Activated CD4-positive, alpha-beta T cell treated with anti-CD3 and anti-CD28 coated beads for 36 hours (primary cell): ENCODE measurements at regions of chr12 and their contacts with region 1.

Region 1: DNA sequence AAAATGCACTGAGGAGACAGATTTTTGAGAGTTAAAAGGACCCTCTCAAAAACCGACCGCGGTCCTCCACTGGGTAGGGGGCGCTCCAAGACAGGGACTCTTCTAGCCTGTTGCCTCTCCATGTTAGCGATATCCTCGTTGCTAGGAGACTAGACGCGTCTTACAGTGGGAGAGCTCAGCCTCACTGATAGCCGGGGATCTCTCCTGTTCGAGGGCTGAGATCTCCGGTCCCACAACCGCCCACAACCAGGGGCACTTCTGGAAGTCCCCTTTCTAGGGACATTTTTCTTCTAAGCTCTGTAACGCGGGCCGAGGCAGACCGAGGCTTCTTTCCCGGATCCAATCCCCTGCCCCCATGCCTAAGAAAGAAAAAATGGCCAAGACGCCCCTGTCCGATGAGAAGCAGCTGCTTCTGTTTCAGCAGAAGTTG is 21.3 kb downstream of the FKBP11 start:
- DNase-seq: peak; percentile 92
- ATAC-seq: peak; percentile 94
- H3K4me3 Mint-ChIP-seq: peak overlapping the region; percentile 63
- H3K27ac Mint-ChIP-seq: no peak overlapping the region
- H3K4me1 Mint-ChIP-seq: peaks cover 5% of the 10 kb centered on the region
- H3K27me3 Mint-ChIP-seq: peaks cover 3% of the 10 kb centered on the region

Region 2: DNA sequence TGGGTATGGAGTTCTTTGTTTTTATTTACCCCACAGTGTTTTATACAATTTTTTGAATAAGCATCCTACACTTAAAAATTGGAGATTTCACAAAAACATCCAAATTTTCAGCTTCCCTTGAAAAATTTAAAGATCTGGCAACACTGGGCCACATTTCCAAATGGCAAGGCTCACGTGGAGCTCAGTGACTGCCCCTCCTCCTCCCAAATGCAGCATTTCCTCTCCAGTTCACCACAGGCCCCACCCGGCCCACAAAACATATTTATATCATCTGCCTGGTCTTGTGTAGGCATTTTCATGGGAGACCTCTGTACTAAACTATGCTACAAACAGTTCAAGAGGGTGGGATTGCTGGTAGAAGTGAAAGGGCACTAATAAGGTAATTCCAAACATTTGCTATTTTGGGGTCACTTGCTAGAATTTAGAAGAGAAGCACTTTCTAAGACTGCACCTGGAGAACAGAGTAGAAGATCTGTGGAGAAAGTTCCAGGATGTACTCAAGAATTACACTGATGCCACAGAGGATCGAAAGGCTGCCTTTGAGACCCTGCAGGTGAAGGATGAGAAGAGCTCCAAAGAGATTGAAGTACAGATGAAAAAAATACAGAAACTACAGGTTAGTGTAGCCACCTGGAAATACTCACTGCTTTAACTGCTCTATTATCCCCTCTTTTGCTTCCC is 14.0 kb after region 1 on chr12:
- CTCF ChIA-PET with region 1: interaction called, 55 read pairs
- POLR2A ChIA-PET with region 1: interaction called, 4 read pairs
- intact Hi-C with region 1: no loop called
- DNase-seq: peak; percentile 42
- ATAC-seq: no peak
- H3K4me3 Mint-ChIP-seq: peak overlapping the region; percentile 64
- H3K27ac Mint-ChIP-seq: peak overlapping the region; percentile 85
- H3K4me1 Mint-ChIP-seq: peaks cover 43% of the 10 kb centered on the region
- H3K27me3 Mint-ChIP-seq: no peaks in the 10 kb centered on the region

Region 3: DNA sequence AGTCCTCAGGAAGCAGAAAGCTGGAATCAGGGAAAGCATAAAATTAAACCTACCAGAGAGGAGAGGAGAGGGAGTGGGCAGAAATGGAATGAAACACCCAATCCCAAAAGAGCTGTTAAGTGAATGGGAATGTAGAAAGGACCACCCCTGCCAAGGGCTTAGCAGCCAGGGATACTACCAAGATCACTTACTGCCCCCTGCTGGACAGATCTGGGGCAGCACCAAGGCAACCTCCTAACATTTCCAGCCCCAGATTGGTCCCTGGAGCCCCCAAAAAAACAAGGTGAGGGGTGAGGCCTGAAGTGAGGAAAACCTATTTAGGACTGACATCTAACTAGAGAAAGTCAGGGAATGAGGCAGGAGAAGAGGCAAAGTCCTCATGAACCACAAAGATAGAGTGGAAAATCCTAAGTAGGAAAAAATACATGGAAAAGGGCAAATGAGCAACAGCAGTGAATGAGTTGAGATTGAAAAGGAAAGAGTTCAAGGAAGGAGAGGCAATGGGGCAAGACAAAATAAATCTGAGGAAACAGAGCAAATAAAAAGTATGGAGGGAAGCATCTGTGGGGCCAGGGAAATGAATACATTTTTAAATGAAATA is 32.5 kb after region 1 on chr12:
- CTCF ChIA-PET with region 1: interaction called, 5 read pairs
- POLR2A ChIA-PET with region 1: no interaction called
- intact Hi-C with region 1: loop called (anchors 1 to 2 kb)
- DNase-seq: peak; percentile 89
- ATAC-seq: peak; percentile 82
- H3K4me3 Mint-ChIP-seq: no peak overlapping the region
- H3K27ac Mint-ChIP-seq: no peak overlapping the region
- H3K4me1 Mint-ChIP-seq: peaks cover 23% of the 10 kb centered on the region
- H3K27me3 Mint-ChIP-seq: no peaks in the 10 kb centered on the region

Region 4: DNA sequence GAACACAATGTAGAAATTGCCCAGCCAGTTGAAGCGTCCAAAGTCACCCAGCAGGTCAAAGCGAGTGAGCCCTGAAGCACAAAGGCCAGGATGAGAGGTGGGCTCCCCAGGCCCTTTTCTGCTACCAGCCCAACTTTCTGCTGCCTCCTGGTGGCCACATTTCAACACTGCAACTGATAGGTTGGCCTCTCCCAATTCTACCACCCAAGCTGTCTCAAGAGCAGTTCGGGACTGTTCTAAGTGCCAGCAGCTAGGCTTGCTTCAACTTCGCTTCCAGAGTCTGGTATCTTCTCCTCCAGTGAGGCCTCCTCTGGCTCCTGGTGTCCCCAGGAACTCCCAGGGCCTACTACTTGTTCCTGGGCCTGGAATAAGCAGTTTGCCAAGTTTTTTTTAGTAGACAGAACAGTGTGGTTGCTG is 194.0 kb after region 1 on chr12:
- CTCF ChIA-PET with region 1: no interaction called
- POLR2A ChIA-PET with region 1: no interaction called
- intact Hi-C with region 1: no loop called
- DNase-seq: peak; percentile 80
- ATAC-seq: peak; percentile 76
- H3K4me3 Mint-ChIP-seq: no peak overlapping the region
- H3K27ac Mint-ChIP-seq: no peak overlapping the region
- H3K4me1 Mint-ChIP-seq: peaks cover 8% of the 10 kb centered on the region
- H3K27me3 Mint-ChIP-seq: peaks cover 19% of the 10 kb centered on the region

Region 5: DNA sequence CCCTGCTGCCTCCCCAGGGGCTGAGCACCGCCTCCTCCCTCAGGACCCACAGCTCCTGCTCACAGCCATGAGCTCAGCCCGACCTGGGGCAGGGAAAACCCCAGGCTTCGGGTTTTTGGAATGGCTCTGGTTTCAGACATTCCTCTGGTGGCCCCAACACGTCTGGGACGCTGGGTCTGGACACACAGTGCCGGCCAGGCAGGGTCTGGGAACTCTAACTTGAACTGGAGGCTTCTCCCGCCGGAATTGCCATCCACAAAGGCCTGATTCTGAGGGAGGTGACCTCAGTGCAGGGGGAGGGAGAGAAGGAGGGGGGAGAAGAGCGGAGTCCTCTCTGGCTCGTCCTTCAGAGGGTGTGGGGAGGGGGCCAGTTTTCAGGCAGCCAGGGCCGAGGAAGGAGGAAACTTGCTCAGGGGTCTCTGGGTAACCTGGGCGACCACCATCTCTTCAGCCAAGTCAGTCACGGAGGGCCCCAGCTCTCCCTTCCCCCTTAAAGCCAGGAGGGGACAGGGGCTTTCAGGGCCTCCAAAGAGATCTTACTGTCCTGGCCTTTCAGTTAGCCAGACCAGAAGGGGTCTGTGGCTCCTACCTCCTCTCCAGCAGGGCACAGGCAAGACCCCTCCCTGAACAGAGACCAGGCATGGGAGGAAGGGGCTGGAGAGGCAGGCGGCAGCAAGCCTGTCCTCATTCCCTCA is 904.8 kb after region 1 on chr12:
- CTCF ChIA-PET with region 1: no interaction called
- POLR2A ChIA-PET with region 1: no interaction called
- intact Hi-C with region 1: no loop called
- DNase-seq: no peak
- ATAC-seq: no peak
- H3K4me3 Mint-ChIP-seq: no peak overlapping the region
- H3K27ac Mint-ChIP-seq: no peak overlapping the region
- H3K4me1 Mint-ChIP-seq: peaks cover 3% of the 10 kb centered on the region
- H3K27me3 Mint-ChIP-seq: no peaks in the 10 kb centered on the region